Gastrocnemius medialis (tissue), 4 donors: ENCODE measurements at regions of chr18 and their contacts with region 1.

Region 1: DNA sequence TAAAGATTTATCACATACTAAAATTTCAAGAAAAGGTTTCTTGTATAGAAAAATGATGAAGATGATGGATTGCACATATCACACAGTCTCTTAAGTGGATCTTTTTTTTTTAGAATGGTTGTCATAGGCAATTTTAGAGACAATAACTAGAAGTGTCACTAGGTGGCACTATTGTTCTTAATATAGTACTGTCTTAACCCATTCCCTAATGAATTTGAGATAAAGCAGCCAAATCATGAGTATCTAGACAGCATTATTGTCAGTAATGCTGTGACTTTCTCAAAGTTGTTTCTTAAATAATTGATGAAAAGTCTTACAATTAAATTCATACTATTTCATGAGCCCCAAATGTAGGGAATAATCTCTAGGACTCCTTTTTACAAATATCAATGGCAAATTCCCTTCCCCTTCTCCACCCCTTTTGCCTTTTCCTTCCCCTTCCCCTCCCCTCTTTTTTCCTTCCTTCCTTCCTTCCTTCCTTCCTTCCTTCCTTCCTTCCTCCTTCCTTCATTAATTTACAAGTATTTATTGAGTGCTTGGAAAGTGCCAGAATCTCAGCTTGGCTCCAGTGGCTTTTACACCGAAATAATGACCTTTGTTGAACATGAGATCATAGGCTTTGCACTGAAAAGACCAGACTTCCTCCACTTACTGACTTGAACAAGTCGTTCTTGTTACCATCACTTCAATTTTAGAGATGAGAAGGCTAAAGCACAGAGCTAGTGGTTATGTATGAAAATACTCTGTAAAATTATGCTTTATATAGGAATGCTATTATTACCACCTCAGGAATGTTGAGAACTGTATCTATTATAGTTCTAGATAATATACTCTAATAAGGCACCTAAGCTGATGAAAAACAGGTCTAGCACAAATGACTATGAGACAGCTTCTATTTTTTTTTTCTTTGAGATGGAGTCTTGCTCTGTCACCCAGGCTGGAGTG is 19.8 kb downstream of the MYL12B start:
- DNase-seq: no peak
- ATAC-seq: peak; percentile 75 to 82
- H3K4me3 ChIP-seq: no peak overlapping the region
- H3K27ac ChIP-seq: no peak overlapping the region
- H3K4me1 ChIP-seq: peaks cover 9 to 10% of the 10 kb centered on the region in 2 donors
- H3K27me3 ChIP-seq: no peaks in the 10 kb centered on the region
- CTCF ChIP-seq: peak; percentile 68 to 87 (median 70)
- POLR2A ChIP-seq: no peak

Region 2: DNA sequence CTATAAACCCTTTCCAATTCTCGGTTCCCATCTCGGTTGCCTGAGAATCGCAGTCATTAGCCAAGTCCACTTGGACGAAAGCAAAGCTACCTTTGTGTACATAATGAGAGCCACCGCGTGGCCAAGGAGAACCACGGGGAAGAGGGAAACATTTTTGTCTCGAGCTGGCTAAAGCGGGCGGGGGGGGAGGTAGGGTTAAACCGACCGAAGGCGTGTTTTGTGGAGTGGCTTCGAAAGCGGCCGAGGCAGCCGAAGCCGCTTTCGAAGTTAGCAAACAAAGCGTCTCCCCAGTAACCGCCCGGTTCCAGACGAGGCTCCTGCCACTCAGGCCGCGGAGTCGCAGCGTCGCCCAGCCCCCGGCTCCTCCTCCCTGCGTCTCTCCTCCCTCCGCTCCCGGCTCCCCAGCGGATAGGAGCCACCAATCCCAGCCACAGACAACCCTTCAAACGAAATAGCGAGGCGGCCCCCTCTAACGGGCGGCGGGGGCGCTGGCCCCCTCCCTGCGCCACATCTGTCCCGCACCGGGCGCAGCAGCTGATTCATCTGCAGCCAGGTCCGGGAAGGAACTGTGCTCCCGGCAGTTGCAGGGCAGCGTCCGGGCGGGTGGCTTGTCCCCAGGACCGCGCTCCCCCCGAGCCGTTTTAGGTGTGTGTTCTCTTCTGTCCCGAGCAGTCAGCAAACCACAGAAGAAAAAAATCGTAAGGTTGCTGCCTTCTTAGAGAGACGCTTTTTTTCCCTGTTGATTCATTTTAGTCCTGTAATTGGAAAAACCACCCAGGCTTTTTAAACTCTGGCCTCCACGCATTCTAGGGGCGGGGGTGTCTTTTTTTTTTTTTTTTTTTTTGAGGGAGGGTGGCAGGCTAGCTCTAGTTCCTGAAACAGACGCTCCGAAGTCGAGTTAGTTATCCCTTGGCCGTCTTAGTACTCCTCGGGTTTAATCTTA is 166.4 kb after region 1 on chr18:
- in situ Hi-C with region 1: loop called in 3 of 4 experiments (anchors 5 to 10 kb)
- intact Hi-C with region 1: no loop called
- DNase-seq: peak; percentile 94 to 95
- ATAC-seq: peak; percentile 55 to 57
- H3K4me3 ChIP-seq: peak overlapping the region; percentile 71 to 97 (median 82)
- H3K27ac ChIP-seq: peak overlapping the region; percentile 98 to 99 (median 99)
- H3K4me1 ChIP-seq: peaks cover 8 to 13% of the 10 kb centered on the region in 2 donors
- H3K27me3 ChIP-seq: no peaks in the 10 kb centered on the region
- CTCF ChIP-seq: peak in 1 of 5 experiments; percentile 7
- POLR2A ChIP-seq: peak; percentile 97 to 98

Region 3: GRCh38 chr18:3454365-3455089 is 172.8 kb after region 1 on chr18:
- in situ Hi-C with region 1: loop called in 3 of 4 experiments (anchors 5 to 10 kb)
- intact Hi-C with region 1: loop called (anchors 2 kb)
- DNase-seq: peak in 1 of 2 donors; percentile 30
- ATAC-seq: no peak
- H3K4me3 ChIP-seq: peak overlapping the region; percentile 71 to 97 (median 82)
- H3K27ac ChIP-seq: peak overlapping the region; percentile 98 to 99 (median 99)
- H3K4me1 ChIP-seq: peaks cover 34 to 39% of the 10 kb centered on the region in 2 donors
- H3K27me3 ChIP-seq: no peaks in the 10 kb centered on the region
- CTCF ChIP-seq: peak; percentile 52 to 79 (median 65)
- POLR2A ChIP-seq: no peak

Region 4: GRCh38 chr18:3585656-3586509 is 304.2 kb after region 1 on chr18:
- in situ Hi-C with region 1: loop called (anchors 5 to 10 kb)
- intact Hi-C with region 1: loop called (anchors 2 kb)
- DNase-seq: peak; percentile 51 to 66
- ATAC-seq: peak; percentile 75 to 81
- H3K4me3 ChIP-seq: no peak overlapping the region
- H3K27ac ChIP-seq: no peak overlapping the region
- H3K4me1 ChIP-seq: no peaks in the 10 kb centered on the region
- H3K27me3 ChIP-seq: no peaks in the 10 kb centered on the region
- CTCF ChIP-seq: peak; percentile 40 to 79 (median 76)
- POLR2A ChIP-seq: no peak